T-cell (primary cell): ENCODE measurements at regions of chr14 and their contacts with region 1.

Region 1: GRCh38 chr14:73633116-73634010 is 11.4 kb upstream of the DNAL1 start:
- DNase-seq: peak in 34 of 35 experiments; percentile 7 to 77 (median 40)
- ATAC-seq: peak; percentile 80 to 90 (median 85)
- H3K4me3 ChIP-seq: peak overlapping the region; percentile 61 to 67
- H3K4me3 Mint-ChIP-seq: peak overlapping the region; percentile 74 to 76 (median 76)
- H3K27ac ChIP-seq: no peak overlapping the region
- H3K27ac Mint-ChIP-seq: peak overlapping the region in 1 of 2 donors; percentile 17
- H3K4me1 ChIP-seq: peaks cover 0 to 12% of the 10 kb centered on the region in 2 experiments
- H3K4me1 Mint-ChIP-seq: peaks cover 4 to 6% (median 5%) of the 10 kb centered on the region in 3 donors
- H3K27me3 ChIP-seq: peaks cover 0 to 27% of the 10 kb centered on the region in 2 experiments
- H3K27me3 Mint-ChIP-seq: peaks cover 10 to 15% of the 10 kb centered on the region in 2 donors

Region 2: GRCh38 chr14:73458151-73458976 is 175.0 kb before region 1 on chr14 and contains the start of gene NUMB:
- CTCF ChIA-PET with region 1: no interaction called
- POLR2A ChIA-PET with region 1: no interaction called
- DNase-seq: peak; percentile 90 to 98 (median 95)
- ATAC-seq: peak; percentile 97 to 99 (median 98)
- H3K4me3 ChIP-seq: peak within 1 kb of the TSS; percentile 91 to 98
- H3K4me3 Mint-ChIP-seq: peak within 1 kb of the TSS; percentile 96 to 100 (median 97)
- H3K27ac ChIP-seq: no peak within 1 kb of the TSS
- H3K27ac Mint-ChIP-seq: peak within 1 kb of the TSS; percentile 89 to 98
- H3K4me1 ChIP-seq: peaks cover 12 to 13% of the 10 kb centered on the region in 2 experiments
- H3K4me1 Mint-ChIP-seq: peaks cover 38 to 47% (median 42%) of the 10 kb centered on the region in 3 donors
- H3K27me3 ChIP-seq: no peaks in the 10 kb centered on the region
- H3K27me3 Mint-ChIP-seq: no peaks in the 10 kb centered on the region
- total RNA-seq, gene NUMB: 45.1 to 52.6 (median 49.1) TPM

Region 3: DNA sequence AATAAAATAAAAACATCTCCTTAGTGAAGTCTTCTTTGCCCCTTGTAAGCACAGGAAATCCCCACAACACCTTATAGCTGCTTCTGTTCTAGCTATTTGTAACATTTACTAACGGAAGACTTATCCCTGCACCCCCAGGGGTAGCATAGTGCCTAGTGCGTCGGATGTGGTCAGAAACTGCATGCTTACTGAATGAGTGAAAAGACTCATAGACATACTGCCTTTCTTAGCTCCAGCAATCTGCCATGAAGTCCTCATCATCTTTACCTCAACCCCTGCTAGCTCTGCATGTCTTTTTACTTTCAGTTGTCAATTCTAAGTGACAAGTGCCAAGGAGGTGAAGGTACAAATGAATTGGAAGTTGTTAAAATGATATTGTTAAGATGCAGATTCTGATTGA is 129.7 kb before region 1 on chr14:
- CTCF ChIA-PET with region 1: interaction called, 7 to 14 read pairs
- POLR2A ChIA-PET with region 1: no interaction called
- DNase-seq: peak in 3 of 35 experiments; percentile 6 to 28 (median 14)
- ATAC-seq: peak in 1 of 4 experiments; percentile 56
- H3K4me3 ChIP-seq: no peak overlapping the region
- H3K4me3 Mint-ChIP-seq: no peak overlapping the region
- H3K27ac ChIP-seq: no peak overlapping the region
- H3K27ac Mint-ChIP-seq: no peak overlapping the region
- H3K4me1 ChIP-seq: no peaks in the 10 kb centered on the region
- H3K4me1 Mint-ChIP-seq: peaks cover 0 to 7% (median 3%) of the 10 kb centered on the region in 3 donors
- H3K27me3 ChIP-seq: no peaks in the 10 kb centered on the region
- H3K27me3 Mint-ChIP-seq: no peaks in the 10 kb centered on the region